ENCODE measurements at regions of chr9 and their contacts with region 1.

Region 1: DNA sequence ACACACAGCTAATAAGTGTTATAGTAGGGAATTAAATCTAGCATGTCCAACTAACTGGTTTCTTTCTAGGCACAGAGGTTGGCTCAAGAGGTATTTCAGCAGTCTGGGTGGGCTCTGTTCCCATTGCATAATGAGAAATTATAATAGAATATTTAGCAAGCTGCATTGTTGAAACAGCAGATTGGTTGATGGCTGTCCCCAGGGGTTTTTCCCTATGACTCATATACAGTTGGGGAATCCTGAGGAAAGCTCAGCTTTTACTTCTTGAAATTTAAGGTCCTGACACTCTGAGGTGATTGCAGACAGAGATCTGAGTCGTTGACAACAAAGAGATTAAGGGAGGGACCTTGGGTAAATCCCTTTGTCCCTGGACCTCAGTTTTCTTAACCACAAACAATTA is 38.3 kb upstream of the TNFSF8 start:
- DNase-seq: no peak
- H3K4me3 ChIP-seq: no peak overlapping the region
- H3K27ac ChIP-seq: no peak overlapping the region
- H3K4me1 ChIP-seq: no peaks in the 10 kb centered on the region
- CTCF ChIP-seq: no peak

Region 2: DNA sequence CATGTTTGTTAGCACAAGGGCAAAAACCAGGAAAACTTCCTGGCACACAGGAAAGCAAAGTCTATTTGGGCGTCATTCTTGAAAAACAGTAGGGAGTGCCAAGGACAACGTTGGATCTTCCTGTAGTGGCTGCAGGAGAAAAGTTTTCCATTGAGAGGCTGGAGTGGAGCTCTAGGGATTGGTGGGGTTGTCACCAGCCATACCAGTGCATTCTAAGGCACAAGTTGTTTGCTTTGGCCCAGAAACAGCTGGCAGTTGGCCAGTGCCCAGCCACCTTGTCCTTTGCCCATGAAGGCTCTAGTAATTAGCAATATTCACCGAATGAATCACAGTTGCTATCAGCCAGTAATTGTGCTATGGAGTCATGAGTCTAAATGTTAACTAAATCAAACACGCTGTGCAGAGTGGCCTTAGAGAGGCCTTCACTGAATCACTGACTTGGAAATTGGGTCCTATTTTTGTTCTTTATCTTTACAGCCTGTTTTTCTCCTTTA is 189.3 kb before region 1 on chr9:
- CTCF ChIA-PET with region 1: no interaction called
- POLR2A ChIA-PET with region 1: no interaction called
- intact Hi-C with region 1: no loop called
- DNase-seq: no peak
- H3K4me3 ChIP-seq: no peak overlapping the region
- H3K27ac ChIP-seq: no peak overlapping the region
- H3K4me1 ChIP-seq: peaks cover 8% of the 10 kb centered on the region
- CTCF ChIP-seq: no peak

Region 3: GRCh38 chr9:114938687-114939575 is 29.7 kb before region 1 on chr9:
- CTCF ChIA-PET with region 1: no interaction called
- POLR2A ChIA-PET with region 1: interaction called, 10 read pairs
- intact Hi-C with region 1: no loop called
- DNase-seq: peak; percentile 51
- H3K4me3 ChIP-seq: no peak overlapping the region
- H3K27ac ChIP-seq: no peak overlapping the region
- H3K4me1 ChIP-seq: peaks cover 13% of the 10 kb centered on the region
- CTCF ChIP-seq: no peak

Region 4: DNA sequence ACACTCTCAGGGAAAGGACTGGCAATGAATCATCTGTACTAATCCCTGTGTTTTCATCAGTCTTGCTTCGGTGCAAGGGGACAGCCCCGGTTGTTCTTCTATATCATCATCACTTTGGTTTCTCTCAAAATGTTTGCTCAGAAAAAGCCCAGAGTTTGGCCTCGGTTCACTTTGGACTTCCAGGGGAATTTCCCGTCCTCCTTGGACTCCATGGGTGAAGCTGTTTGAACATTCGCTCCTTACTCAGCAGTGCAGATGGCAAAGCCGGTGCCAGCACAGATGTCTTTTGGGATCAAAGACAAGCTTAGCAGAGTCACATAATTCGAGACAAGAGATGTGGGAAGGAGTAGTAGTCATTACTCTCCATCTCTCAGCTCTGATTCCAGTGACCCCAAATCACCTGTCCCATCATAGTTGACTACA is 31.6 kb after region 1 on chr9:
- CTCF ChIA-PET with region 1: no interaction called
- POLR2A ChIA-PET with region 1: interaction called, 4 read pairs
- intact Hi-C with region 1: loop called (anchors 5 kb)
- DNase-seq: no peak
- H3K4me3 ChIP-seq: no peak overlapping the region
- H3K27ac ChIP-seq: no peak overlapping the region
- H3K4me1 ChIP-seq: no peaks in the 10 kb centered on the region
- CTCF ChIP-seq: no peak